PC-9 (cell line): ENCODE measurements at regions of chr15 and their contacts with region 1.

Region 1: GRCh38 chr15:31163746-31164563 is 62.4 kb upstream of the TRPM1 start:
- DNase-seq: no peak
- H3K4me3 ChIP-seq: no peak overlapping the region
- H3K27ac ChIP-seq: no peak overlapping the region
- H3K4me1 ChIP-seq: no peaks in the 10 kb centered on the region
- H3K27me3 ChIP-seq: peaks cover 47% of the 10 kb centered on the region
- CTCF ChIP-seq: no peak

Region 2: DNA sequence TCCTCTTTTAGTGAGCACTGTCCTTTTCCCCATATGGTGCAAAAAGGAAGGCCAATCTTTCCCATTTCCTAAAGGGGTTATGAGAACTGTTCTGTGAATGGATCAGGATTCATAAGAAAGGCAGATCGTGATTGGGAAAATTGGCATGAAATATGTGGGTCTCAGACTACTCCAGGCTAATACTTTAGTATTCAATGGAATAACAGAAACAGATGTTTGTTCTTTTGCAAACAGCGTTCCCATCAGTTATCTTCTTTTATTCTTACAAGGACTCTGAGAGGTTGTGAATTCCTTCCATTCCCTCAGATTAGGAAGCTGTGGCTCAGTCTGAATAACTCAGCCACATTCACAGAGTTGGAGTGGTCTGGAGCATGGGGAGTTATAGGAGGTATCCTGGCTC is 121.2 kb before region 1 on chr15:
- CTCF ChIA-PET with region 1: no interaction called
- POLR2A ChIA-PET with region 1: no interaction called
- intact Hi-C with region 1: loop called (anchors 5 kb)
- DNase-seq: no peak
- H3K4me3 ChIP-seq: no peak overlapping the region
- H3K27ac ChIP-seq: no peak overlapping the region
- H3K4me1 ChIP-seq: no peaks in the 10 kb centered on the region
- H3K27me3 ChIP-seq: peaks cover 60% of the 10 kb centered on the region
- CTCF ChIP-seq: no peak

Region 3: DNA sequence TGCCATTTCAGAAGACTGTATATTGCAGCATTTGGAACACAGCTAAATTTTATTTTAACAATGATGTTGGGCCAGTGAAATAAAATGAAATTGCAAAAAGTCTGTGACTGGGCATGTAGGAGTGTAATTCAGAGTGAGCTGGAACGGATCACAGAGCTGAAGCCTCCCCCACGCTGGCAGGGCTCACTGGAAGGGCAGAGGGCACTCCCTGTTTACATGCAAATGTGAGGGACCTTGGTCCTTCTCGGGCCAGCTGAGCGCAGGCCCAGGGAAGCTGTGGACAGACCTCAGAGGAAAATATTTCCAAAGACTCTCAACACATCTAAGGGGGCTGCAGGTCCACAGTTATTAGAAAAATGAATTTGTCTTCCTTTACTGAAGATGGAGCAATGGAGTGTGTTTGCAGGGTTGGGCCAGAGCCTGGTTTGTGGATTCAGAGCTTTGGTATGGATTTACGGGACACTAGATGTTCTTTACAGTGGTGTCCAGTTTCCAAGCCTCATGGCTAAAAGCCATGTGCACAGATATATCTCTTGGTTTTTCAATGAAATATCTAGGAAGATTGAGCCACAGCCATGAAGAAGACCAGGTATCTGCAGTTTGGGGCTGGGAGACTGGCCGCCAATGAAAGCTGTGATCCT is 94.5 kb before region 1 on chr15:
- CTCF ChIA-PET with region 1: no interaction called
- POLR2A ChIA-PET with region 1: no interaction called
- intact Hi-C with region 1: no loop called
- DNase-seq: no peak
- H3K4me3 ChIP-seq: no peak overlapping the region
- H3K27ac ChIP-seq: no peak overlapping the region
- H3K4me1 ChIP-seq: no peaks in the 10 kb centered on the region
- H3K27me3 ChIP-seq: peaks cover 6% of the 10 kb centered on the region; the same call in 1 of the 2 replicates
- CTCF ChIP-seq: no peak